Caco-2 (cell line): ENCODE measurements at regions of chr17 and their contacts with region 1.

Region 1: GRCh38 chr17:49548506-49549310 is 27.0 kb upstream of the NXPH3 start:
- DNase-seq: peak; percentile 75 to 77
- H3K4me3 ChIP-seq: no peak overlapping the region
- H3K4me3 Mint-ChIP-seq: no peak overlapping the region
- H3K27ac Mint-ChIP-seq: no peak overlapping the region
- H3K4me1 ChIP-seq: peaks cover 5% of the 10 kb centered on the region; the same call in 1 of the 2 replicates
- H3K4me1 Mint-ChIP-seq: peaks cover 9% of the 10 kb centered on the region
- H3K27me3 ChIP-seq: no peaks in the 10 kb centered on the region
- H3K27me3 Mint-ChIP-seq: no peaks in the 10 kb centered on the region
- CTCF ChIP-seq: peak; percentile 82 to 93

Region 2: GRCh38 chr17:49407981-49408501 is 140.7 kb before region 1 on chr17:
- CTCF ChIA-PET with region 1: interaction called, 10 read pairs
- POLR2A ChIA-PET with region 1: no interaction called
- intact Hi-C with region 1: loop called (anchors 1 kb)
- DNase-seq: peak; percentile 96 to 98
- H3K4me3 ChIP-seq: no peak overlapping the region
- H3K4me3 Mint-ChIP-seq: no peak overlapping the region
- H3K27ac Mint-ChIP-seq: peak overlapping the region; percentile 17
- H3K4me1 ChIP-seq: peaks cover 5% of the 10 kb centered on the region; the same call in 1 of the 2 replicates
- H3K4me1 Mint-ChIP-seq: peaks cover 10% of the 10 kb centered on the region
- H3K27me3 ChIP-seq: no peaks in the 10 kb centered on the region
- H3K27me3 Mint-ChIP-seq: no peaks in the 10 kb centered on the region
- CTCF ChIP-seq: peak; percentile 100

Region 3: DNA sequence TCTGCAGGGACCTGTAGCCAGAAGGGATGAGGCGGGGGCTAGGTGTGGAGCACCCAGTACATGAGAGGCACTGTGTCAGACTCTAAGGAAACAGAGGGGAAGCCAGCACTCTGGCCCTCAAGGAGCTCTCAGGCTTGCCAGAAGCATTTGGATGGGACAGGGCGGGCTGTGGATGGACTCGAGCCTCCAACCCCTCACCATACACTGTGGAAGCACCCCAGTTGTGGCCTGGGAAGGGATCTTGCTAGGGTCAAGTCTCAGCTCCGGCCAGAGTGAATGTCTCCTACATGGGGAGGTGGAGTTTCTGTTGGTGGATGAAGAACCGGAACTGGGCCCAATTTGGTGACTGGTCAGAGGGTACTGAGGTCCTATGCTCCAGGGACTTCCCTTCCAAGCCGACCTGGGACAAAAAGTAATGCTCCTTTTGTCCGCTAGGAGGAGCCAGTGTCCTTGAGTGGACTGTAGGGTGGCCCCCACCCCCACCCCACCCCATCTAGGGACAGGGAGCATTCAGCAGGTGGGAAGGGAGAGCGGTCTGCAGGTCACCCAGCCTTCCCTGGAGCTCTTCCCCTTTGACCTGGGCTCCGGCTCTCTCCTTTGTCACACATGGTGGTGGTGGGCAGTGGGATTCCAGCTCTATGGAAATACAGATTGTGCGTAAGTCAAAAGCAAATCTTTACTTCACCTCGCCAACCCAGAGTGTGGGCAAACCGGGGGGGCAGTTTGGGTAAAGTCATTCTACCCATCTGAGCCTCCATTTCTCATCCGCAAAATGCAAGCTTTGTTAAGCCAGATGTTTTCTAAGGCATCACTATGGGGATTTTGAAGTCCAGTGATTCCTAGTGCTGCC is 113.7 kb before region 1 on chr17:
- CTCF ChIA-PET with region 1: interaction called, 3 read pairs
- POLR2A ChIA-PET with region 1: interaction called, 4 read pairs
- intact Hi-C with region 1: loop called (anchors 1 kb)
- DNase-seq: peak; percentile 85 to 88
- H3K4me3 ChIP-seq: no peak overlapping the region
- H3K4me3 Mint-ChIP-seq: no peak overlapping the region
- H3K27ac Mint-ChIP-seq: no peak overlapping the region
- H3K4me1 ChIP-seq: no peaks in the 10 kb centered on the region
- H3K4me1 Mint-ChIP-seq: no peaks in the 10 kb centered on the region
- H3K27me3 ChIP-seq: peaks cover 5% of the 10 kb centered on the region
- H3K27me3 Mint-ChIP-seq: peaks cover 31% of the 10 kb centered on the region
- CTCF ChIP-seq: peak; percentile 97 to 99

Region 4: DNA sequence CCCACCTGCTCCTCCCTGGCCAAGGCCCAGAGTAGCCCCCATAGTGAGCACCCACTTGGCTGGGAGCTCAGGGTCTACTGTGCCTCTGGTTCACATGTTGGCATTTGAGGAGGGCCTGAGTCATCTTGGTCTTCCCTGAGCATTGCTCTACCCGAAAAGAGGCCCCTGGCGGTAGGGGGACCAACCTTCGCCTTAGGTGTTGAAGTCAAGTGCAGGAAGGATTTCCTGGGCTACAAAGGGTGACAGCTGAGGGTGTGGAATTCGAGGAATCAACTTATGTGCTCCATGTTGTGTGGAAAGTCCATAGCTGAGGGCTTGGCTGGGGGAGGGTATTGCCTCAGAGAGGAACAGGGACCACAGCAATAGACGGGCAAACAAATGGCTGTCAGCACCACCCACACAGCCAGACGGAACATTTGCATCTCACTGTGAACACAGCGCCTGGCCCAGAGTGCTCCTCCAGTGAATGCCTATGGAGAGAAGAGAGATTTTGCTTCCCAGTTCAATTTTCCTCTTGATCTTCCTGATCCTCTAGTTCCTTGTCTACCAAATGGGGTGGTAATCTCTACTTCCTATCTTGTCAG is 89.2 kb before region 1 on chr17:
- CTCF ChIA-PET with region 1: no interaction called
- POLR2A ChIA-PET with region 1: no interaction called
- intact Hi-C with region 1: no loop called
- DNase-seq: no peak
- H3K4me3 ChIP-seq: no peak overlapping the region
- H3K4me3 Mint-ChIP-seq: no peak overlapping the region
- H3K27ac Mint-ChIP-seq: no peak overlapping the region
- H3K4me1 ChIP-seq: no peaks in the 10 kb centered on the region
- H3K4me1 Mint-ChIP-seq: no peaks in the 10 kb centered on the region
- H3K27me3 ChIP-seq: peaks cover 7% of the 10 kb centered on the region
- H3K27me3 Mint-ChIP-seq: peaks cover 45% of the 10 kb centered on the region
- CTCF ChIP-seq: peak in 1 of 2 experiments; percentile 7

Region 5: GRCh38 chr17:49508061-49508865 is 40.4 kb before region 1 on chr17:
- CTCF ChIA-PET with region 1: interaction called, 10 read pairs
- POLR2A ChIA-PET with region 1: no interaction called
- intact Hi-C with region 1: no loop called
- DNase-seq: peak; percentile 88 to 92
- H3K4me3 ChIP-seq: no peak overlapping the region
- H3K4me3 Mint-ChIP-seq: peak overlapping the region; percentile 40
- H3K27ac Mint-ChIP-seq: peak overlapping the region; percentile 53
- H3K4me1 ChIP-seq: peaks cover 21% of the 10 kb centered on the region
- H3K4me1 Mint-ChIP-seq: peaks cover 22% of the 10 kb centered on the region
- H3K27me3 ChIP-seq: no peaks in the 10 kb centered on the region
- H3K27me3 Mint-ChIP-seq: peaks cover 5% of the 10 kb centered on the region
- CTCF ChIP-seq: no peak